Caco-2 (cell line): ENCODE measurements at regions of chr3 and their contacts with region 1.

Region 1: GRCh38 chr3:156382458-156383346 is 172.2 kb downstream of the SSR3 start:
- DNase-seq: peak; percentile 46 to 59
- H3K4me3 ChIP-seq: no peak overlapping the region
- H3K4me3 Mint-ChIP-seq: no peak overlapping the region
- H3K27ac Mint-ChIP-seq: no peak overlapping the region
- H3K4me1 ChIP-seq: peaks cover 2% of the 10 kb centered on the region; the same call in 1 of the 2 replicates
- H3K4me1 Mint-ChIP-seq: no peaks in the 10 kb centered on the region
- H3K27me3 ChIP-seq: no peaks in the 10 kb centered on the region
- H3K27me3 Mint-ChIP-seq: peaks cover 3% of the 10 kb centered on the region
- CTCF ChIP-seq: peak; percentile 50 to 64

Region 2: GRCh38 chr3:155791190-155791589 is 591.5 kb before region 1 on chr3:
- CTCF ChIA-PET with region 1: no interaction called
- POLR2A ChIA-PET with region 1: no interaction called
- intact Hi-C with region 1: no loop called
- DNase-seq: no peak
- H3K4me3 ChIP-seq: no peak overlapping the region
- H3K4me3 Mint-ChIP-seq: no peak overlapping the region
- H3K27ac Mint-ChIP-seq: no peak overlapping the region
- H3K4me1 ChIP-seq: no peaks in the 10 kb centered on the region
- H3K4me1 Mint-ChIP-seq: peaks cover 10% of the 10 kb centered on the region
- H3K27me3 ChIP-seq: no peaks in the 10 kb centered on the region
- H3K27me3 Mint-ChIP-seq: no peaks in the 10 kb centered on the region
- CTCF ChIP-seq: no peak

Region 3: GRCh38 chr3:156174229-156174847 is 208.4 kb before region 1 on chr3:
- CTCF ChIA-PET with region 1: interaction called, 8 read pairs
- POLR2A ChIA-PET with region 1: no interaction called
- intact Hi-C with region 1: loop called (anchors 5 kb)
- DNase-seq: peak in 1 of 2 experiments; percentile 10
- H3K4me3 ChIP-seq: no peak overlapping the region
- H3K4me3 Mint-ChIP-seq: no peak overlapping the region
- H3K27ac Mint-ChIP-seq: no peak overlapping the region
- H3K4me1 ChIP-seq: no peaks in the 10 kb centered on the region
- H3K4me1 Mint-ChIP-seq: no peaks in the 10 kb centered on the region
- H3K27me3 ChIP-seq: no peaks in the 10 kb centered on the region
- H3K27me3 Mint-ChIP-seq: peaks cover 6% of the 10 kb centered on the region
- CTCF ChIP-seq: peak in 1 of 2 experiments; percentile 49

Region 4: GRCh38 chr3:156323466-156323865 is 59.2 kb before region 1 on chr3:
- CTCF ChIA-PET with region 1: no interaction called
- POLR2A ChIA-PET with region 1: no interaction called
- intact Hi-C with region 1: no loop called
- DNase-seq: no peak
- H3K4me3 ChIP-seq: no peak overlapping the region
- H3K4me3 Mint-ChIP-seq: no peak overlapping the region
- H3K27ac Mint-ChIP-seq: no peak overlapping the region
- H3K4me1 ChIP-seq: no peaks in the 10 kb centered on the region
- H3K4me1 Mint-ChIP-seq: no peaks in the 10 kb centered on the region
- H3K27me3 ChIP-seq: no peaks in the 10 kb centered on the region
- H3K27me3 Mint-ChIP-seq: peaks cover 4% of the 10 kb centered on the region
- CTCF ChIP-seq: no peak